Lower leg skin (tissue), 4 donors: ENCODE measurements at regions of chr2 and their contacts with region 1.

Region 1: GRCh38 chr2:232013701-232014353 is 52.3 kb downstream of the DIS3L2 start:
- DNase-seq: no peak
- H3K4me3 ChIP-seq: no peak overlapping the region
- CTCF ChIP-seq: no peak
- POLR2A ChIP-seq: no peak

Region 2: GRCh38 chr2:231348173-231348572 is 665.7 kb before region 1 on chr2:
- intact Hi-C with region 1: no loop called
- DNase-seq: peak in 1 of 2 donors; percentile 14
- H3K4me3 ChIP-seq: no peak overlapping the region
- CTCF ChIP-seq: no peak
- POLR2A ChIP-seq: no peak

Region 3: DNA sequence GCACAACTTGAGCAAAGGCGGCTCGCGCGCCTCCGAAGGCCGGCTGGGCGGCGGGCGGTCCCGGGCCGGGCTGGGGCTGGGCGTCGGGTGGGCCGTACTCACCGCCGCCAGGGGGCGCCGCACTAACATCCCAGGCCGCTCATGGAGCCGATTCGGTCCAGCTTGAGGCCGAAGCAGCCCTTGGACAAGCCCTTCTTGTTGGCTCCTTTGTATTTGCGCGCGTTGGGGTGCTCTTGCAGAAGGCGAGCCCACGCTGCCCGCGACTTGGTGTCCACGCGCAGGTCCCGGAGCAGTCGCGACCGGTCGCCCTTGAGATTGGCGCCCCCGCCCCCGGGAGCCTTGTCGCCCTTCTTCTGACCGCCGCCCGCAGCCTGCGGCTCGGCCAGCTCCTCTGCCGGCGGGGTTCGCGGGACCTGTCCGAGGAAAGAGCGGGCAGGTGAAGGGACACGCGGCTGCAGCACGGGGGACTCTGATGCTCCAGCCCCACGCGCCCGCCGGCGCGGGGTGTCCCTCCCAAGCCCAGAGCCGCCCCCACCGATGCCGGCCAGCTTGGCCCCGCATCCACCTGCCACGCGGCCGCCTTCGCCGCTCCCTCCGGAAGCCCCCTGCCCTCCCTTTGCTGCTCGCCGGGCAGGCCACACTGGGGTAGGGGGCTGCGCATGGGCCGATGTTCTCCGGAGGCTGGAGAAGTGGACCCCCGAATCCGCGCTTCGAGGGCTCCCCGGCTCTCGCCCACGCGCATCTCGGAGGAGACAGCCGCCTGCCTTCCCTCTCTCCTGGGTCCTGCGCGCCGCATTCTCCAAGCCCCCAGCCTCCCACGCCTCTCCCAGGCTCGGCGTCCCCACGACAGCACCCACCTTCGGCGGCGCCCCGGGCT is 88.3 kb before region 1 on chr2:
- intact Hi-C with region 1: no loop called
- DNase-seq: peak; percentile 50 to 95
- H3K4me3 ChIP-seq: peak overlapping the region; percentile 21
- CTCF ChIP-seq: no peak
- POLR2A ChIP-seq: no peak

Region 4: DNA sequence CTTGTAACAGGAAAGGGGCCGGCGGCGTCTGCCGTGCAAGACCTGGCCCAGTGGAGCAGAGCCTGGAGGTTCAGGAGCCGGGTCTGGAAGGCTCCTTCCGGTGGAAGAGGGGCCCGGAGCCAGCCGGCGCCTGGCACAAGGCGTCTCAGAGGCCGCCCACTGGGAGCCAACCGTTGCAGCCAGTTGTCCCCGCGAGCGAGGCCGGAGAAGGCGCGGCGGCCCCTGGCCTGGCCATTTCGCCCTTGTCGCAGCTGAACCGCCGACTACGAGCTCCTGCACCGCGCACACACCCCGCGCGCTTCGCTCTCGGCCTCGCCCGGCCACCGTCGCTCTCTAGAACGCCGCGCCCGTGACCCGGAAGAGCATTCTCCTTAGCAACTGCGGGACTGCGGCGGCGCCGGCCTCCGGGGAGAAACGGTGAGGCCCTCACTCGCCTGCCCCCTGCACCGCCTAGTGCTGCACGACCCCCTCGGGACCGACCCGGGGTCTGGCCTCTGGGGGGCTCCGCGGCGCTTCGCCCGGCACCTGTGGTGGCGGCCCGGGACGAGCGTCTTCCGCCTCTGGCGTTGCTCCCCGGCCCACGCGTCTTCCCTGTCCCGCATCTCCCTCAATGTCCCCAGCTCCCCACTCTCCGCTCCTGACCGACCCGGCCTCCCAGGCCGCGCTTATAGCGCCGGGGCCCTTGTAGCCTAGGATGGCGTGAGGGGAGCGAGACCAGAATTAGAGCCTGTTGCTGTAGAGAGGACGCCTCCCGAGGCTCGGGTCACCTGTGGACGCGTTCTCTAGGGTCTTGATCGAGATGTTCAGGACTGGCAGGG is 52.3 kb before region 1 on chr2 and contains the start of gene DIS3L2:
- intact Hi-C with region 1: loop called (anchors 2 kb)
- DNase-seq: peak; percentile 47 to 92
- H3K4me3 ChIP-seq: peak within 1 kb of the TSS; percentile 97
- CTCF ChIP-seq: no peak
- POLR2A ChIP-seq: no peak
- total RNA-seq, gene DIS3L2: 26.4 to 39.0 (median 34.4) TPM